Activated CD4-positive, alpha-beta T cell treated with anti-CD3 and anti-CD28 coated beads, Interleukin-2, amount 10 ng/mL, durations not matched to agents 24 days and 14 days (primary cell): ENCODE measurements at regions of chr6 and their contacts with region 1.

Region 1: DNA sequence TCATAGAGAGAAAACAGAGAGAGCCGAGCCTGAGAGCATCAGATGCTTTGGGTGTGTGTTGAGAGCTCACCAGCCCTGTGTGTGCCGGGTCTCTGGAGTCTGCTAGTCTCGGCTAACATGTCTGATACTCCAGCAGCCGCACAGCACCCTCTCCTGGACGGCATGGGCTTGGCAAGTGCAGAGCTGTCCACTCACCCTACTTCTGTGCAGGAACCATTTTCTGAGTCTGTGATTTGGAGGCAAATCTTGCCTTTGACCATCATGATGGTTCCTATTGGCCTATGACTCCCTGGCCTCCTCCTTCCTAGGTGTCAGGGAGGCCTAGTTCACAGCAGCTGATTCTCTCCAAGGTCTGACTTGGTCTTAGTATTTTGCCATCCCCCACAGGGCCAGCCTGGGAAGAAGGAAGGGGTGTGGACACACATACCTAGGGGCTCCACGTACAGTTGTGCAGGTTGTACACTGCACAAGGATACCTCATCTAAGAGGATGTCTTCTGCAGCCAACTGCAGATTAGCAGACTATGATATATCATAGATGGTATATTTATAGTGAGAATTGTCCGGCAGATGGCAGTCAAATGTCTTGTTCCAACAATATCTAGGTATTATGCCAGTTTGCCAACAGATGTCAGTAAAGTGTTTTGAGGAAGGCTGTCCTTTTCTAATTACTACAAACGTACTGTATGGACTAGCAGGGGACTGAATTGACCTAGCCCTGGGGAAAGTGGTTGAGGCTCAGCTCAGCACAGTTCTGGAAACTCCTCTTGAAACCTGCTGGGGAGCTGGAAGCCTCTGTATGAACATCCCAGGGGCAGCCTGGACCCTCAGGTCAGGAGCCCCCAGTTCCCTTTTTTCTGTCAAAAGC is 13.0 kb downstream of the FGD2 start:
- DNase-seq: peak; percentile 97
- H3K4me3 Mint-ChIP-seq: peak overlapping the region; percentile 16
- H3K27ac Mint-ChIP-seq: peak overlapping the region; percentile 85
- H3K4me1 Mint-ChIP-seq: peaks cover 44% of the 10 kb centered on the region
- H3K27me3 Mint-ChIP-seq: no peaks in the 10 kb centered on the region

Region 2: DNA sequence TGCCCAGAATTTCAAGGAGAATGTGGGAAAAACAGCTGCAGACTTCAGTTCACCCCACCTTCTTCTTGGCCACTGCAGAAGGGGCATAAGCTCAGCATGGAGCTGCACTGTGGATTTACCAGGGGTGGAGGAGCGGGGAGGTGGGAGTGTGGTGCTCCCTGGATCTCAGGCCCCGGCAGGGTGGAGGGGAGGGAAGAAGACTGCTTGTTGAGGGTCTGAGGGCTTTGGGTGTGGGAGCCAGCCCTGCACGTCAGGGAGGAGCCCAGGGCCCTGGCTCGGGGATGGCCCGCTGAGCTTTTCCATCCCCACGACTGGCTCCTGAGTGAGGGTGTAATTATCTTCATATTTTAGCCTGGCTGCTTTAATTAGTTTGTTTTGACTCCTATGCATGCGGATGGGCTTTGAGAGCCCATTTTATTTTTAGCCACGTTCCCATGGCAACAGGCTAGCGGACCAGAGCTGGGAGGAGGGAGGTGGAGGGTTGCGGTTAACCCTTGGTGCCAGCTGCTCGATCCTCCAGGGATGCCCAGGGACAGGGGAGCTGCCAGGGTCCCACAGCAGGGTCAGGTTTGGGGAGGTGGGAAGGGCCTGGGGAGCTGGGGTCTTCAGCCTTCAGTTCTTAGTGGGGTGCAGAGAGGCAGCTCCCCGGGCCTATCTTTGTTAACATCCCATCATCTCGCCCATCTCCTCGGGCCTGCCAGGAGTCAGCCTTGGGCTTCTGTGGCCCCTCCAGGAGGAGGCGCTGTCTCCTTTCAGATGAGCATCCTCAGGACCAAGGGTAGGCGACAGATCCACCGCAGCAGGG is 252.6 kb before region 1 on chr6:
- intact Hi-C with region 1: loop called (anchors 1 kb)
- DNase-seq: peak; percentile 96
- H3K4me3 Mint-ChIP-seq: no peak overlapping the region
- H3K27ac Mint-ChIP-seq: no peak overlapping the region
- H3K4me1 Mint-ChIP-seq: peaks cover 30% of the 10 kb centered on the region
- H3K27me3 Mint-ChIP-seq: no peaks in the 10 kb centered on the region

Region 3: DNA sequence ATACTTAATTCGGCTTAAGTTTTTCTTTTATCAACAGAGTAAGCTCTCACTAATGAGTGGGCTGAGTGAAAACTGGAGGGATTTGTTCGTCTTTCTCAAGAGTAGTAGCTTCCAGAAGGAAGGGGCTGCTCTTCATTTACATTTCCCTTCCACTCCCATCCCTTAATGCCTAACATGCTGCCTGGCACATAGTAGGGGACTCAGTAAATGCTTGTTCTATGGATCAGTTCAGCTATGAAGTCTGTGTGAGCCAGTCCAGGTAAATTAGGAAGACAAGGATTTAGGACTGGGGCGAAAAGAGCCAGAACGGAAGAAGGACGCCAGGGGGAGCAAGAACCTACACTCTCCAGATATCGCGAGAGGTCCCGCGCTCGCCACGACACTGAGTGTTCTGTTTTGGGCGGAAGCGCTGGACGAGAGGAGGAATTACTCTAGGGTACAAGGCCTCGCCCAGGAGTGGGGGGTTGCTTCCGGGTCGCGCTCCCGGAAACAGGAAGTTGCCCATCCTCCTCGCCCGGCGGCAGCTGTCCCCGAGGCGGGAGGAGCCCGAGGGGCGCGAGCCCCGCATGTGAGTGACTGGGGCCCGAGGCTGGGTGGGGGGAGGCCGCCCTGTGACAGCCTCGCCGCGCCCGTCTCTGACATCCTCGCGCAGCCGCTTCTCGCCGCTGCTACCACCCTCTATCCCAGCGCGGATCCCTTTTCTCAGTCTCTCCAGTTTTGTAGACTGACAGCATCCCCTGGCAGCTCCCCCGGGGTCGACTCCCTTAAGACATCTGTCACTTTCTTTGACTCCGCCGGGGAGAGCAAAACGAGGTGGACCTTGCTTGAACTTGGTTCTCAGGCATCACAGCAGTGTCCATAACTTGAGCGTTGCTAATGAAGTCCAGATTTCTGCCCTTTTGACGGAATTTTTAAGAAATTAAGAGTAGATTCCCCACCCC is 132.7 kb before region 1 on chr6 and contains the start of gene C6orf89:
- intact Hi-C with region 1: loop called (anchors 1 kb)
- DNase-seq: peak; percentile 99
- H3K4me3 Mint-ChIP-seq: peak within 1 kb of the TSS; percentile 89
- H3K27ac Mint-ChIP-seq: peak within 1 kb of the TSS; percentile 89
- H3K4me1 Mint-ChIP-seq: peaks cover 28% of the 10 kb centered on the region
- H3K27me3 Mint-ChIP-seq: no peaks in the 10 kb centered on the region
- total RNA-seq, gene C6orf89: 25.9 and 27.4 TPM in 2 replicates

Region 4: DNA sequence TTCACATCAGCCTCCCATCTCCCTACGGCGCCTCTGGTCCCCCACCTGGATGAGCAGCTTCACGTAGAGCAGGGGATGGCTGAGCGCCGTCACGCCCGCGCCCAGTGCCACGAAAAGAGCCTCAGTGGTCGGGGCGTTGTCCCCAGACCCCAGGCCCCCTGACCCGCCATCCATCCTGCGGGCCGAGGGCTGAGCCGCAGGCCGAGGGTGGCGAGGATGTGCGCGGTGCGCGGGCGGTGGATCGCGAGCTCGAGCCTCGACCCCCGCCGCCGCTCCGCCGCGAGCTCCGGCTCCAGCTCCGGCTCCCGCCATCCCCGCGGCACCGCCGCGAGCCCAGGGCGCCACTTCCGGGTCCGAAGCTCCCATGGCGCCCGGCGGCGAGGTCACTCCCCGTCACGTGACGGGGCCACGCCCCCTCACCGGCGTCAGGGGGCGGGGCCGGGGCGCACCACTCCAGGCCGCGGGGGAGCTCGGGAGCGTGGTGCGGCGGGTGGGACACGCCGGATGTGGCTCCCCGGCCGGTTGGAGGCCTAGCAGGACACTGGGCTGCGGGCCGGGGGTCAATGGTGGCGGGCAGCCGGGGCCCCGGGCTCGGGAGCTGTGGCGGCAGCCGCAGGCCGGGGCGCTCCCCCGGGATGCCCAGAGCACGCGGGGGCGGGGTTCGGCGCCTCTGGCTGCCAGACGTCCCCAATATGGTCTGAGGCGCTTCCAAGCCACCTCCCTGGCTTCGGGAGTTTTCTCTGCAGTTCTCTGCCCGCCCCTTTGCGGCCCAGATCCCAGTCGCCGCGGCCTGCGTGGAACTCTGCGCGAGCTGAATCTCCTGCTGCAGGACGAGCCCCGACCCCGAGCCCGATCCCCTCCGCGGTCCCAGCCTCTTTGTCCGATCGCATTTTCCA is 32.4 kb before region 1 on chr6 and contains the start of gene MTCH1:
- intact Hi-C with region 1: loop called (anchors 1 kb)
- DNase-seq: peak; percentile 97
- H3K4me3 Mint-ChIP-seq: no peak within 1 kb of the TSS
- H3K27ac Mint-ChIP-seq: peak within 1 kb of the TSS; percentile 97
- H3K4me1 Mint-ChIP-seq: peaks cover 19% of the 10 kb centered on the region
- H3K27me3 Mint-ChIP-seq: peaks cover 7% of the 10 kb centered on the region
- total RNA-seq, gene MTCH1: 119 TPM in 2 replicates

Region 5: DNA sequence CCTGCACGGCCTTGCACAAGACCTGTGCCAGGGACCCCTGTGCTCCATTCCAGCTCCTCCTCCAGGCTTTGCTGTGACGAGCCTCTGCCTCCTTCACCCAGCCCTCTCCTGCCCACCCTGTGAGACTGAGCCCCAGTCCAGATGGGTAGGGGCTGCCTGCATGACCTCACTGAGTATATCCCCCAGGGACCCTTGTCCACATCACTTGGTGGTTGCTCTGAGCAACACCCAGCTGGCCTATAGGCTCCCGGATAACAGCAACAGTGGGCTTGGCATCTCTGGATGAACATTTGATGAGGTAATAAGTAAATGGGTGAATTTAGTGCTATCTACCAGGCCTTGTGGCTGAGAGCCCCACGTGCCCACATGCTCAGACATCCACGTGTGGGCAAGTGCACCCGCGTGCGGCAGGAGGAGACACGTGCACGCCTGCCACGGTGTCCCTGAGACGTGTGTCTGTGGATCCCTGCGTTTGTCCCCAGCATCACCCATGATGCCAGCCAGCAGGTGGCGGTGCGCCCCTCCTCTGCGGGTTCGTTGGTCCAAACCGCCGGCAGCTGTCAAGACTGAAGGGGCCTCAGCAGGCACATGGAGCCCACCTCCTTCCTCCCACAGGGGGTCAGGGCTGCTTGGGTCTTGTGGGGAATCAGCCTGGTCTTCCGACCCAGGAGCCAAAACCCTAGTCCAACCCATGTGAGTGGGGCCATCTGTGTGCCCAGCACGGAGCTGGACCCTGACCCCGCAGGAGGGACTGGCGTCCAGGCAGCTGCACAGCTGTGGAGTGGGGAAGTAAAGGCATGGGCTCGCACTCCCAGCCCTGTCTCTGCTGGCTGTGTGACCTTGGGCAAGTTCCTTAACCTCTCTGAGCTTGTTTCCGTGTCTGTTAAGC is 33.0 kb after region 1 on chr6:
- intact Hi-C with region 1: loop called (anchors 1 kb)
- DNase-seq: peak; percentile 96
- H3K4me3 Mint-ChIP-seq: peak overlapping the region; percentile 88
- H3K27ac Mint-ChIP-seq: peak overlapping the region; percentile 98
- H3K4me1 Mint-ChIP-seq: peaks cover 57% of the 10 kb centered on the region
- H3K27me3 Mint-ChIP-seq: no peaks in the 10 kb centered on the region

Region 6: DNA sequence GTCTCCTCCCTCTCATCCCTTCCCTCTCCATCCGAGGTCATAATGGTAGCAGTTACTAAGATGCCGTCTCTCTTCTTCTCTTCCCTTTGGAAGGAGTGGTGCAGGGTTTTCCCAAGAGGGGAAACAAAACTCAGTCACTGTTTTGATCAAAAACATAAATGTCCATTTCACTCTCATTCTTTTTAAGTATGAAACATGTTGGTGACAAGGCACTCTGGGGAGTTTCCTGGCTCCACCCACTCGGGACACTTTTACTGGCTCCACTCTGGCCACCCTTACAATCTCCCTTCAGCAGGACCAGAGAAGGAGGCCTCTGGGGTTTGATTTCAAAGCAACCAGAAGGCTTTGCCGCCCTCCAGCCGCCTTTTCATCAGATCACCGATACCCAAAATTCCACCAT is 44.0 kb after region 1 on chr6:
- intact Hi-C with region 1: no loop called
- DNase-seq: no peak
- H3K4me3 Mint-ChIP-seq: no peak overlapping the region
- H3K27ac Mint-ChIP-seq: no peak overlapping the region
- H3K4me1 Mint-ChIP-seq: peaks cover 17% of the 10 kb centered on the region
- H3K27me3 Mint-ChIP-seq: no peaks in the 10 kb centered on the region

Region 7: DNA sequence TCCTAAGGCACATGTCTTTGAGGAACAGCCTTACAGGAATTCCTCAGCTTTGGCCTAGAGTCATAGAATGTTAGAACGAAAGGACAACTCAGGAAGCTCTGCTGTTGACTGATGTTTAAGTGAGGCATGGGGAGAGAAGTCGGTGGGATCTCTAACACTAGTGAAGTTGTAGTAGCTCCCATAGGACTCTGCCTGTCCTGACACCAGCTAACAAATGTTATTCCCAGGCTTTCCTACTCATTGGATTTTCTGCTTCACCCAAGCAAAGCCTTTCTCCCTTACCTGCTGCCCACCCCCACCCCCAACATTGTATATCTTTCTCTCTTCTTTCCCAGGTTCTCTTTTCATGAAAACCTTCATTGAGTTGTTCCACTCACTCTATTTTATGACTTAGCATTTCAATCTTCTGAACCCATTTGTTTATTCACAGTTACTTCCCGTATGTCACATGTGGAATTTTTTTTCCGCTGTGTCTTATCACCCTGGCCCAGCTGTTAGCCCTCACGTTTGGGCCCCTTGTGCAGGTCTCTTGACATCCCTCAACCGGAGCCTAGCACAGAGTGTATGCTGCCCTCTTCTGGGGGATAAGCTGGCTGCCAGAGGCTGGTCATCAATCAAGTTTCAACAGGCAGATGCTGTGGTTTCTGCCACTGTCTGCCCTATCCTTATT is 296.2 kb after region 1 on chr6:
- intact Hi-C with region 1: loop called (anchors 1 kb)
- DNase-seq: peak; percentile 87
- H3K4me3 Mint-ChIP-seq: no peak overlapping the region
- H3K27ac Mint-ChIP-seq: peak overlapping the region; percentile 12
- H3K4me1 Mint-ChIP-seq: peaks cover 12% of the 10 kb centered on the region
- H3K27me3 Mint-ChIP-seq: no peaks in the 10 kb centered on the region